Ascending aorta (tissue), 2 donors: ENCODE measurements at regions of chr21 and their contacts with region 1.

Region 1: GRCh38 chr21:41612674-41613532 is 104.9 kb upstream of the TMPRSS2 start:
- DNase-seq: peak; percentile 80 to 97
- H3K4me3 ChIP-seq: no peak overlapping the region
- H3K27ac ChIP-seq: peak overlapping the region; percentile 94 to 98
- H3K4me1 ChIP-seq: peaks cover 31 to 53% of the 10 kb centered on the region in 2 donors
- H3K27me3 ChIP-seq: no peaks in the 10 kb centered on the region
- CTCF ChIP-seq: peak; percentile 87 to 89 (median 87)

Region 2: GRCh38 chr21:41419911-41420862 is 192.7 kb before region 1 on chr21:
- intact Hi-C with region 1: loop called (anchors 10 kb)
- DNase-seq: peak; percentile 53 to 93
- H3K4me3 ChIP-seq: peak overlapping the region; percentile 79 to 82
- H3K27ac ChIP-seq: peak overlapping the region; percentile 83 to 88
- H3K4me1 ChIP-seq: no peaks in the 10 kb centered on the region
- H3K27me3 ChIP-seq: no peaks in the 10 kb centered on the region
- CTCF ChIP-seq: no peak

Region 3: DNA sequence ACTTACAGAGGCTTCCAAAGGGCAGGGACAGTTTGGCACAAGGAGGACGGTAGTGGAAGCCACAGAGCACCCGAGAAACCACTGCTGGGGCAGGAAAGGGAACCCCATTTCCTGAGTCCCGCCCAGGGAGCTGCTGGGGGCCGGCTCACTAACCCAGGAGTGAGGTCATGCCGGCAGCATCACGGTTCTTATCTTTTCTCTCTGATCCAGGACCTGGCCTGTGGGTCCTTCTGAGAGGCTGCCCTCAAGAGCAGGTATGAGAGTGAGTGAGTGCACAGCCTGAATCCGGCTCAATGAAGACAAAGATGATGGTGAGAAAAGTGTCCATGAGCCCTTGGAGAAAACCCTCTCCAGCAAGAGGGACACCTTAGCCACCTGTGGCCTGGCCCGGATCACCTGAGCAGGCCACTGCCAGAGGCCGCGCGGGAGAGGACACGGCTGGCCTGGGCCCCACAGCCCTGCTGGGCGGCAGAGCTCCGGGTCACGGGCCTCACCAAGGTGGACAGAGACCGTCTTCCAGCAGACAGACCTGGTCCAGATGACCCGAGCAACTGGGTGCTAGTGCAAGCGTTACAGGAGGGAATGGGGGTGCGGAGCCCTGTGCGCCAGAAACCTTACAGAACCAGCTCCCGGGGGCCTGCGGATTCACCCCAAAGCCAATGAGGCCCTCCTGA is 59.1 kb after region 1 on chr21:
- intact Hi-C with region 1: no loop called
- DNase-seq: no peak
- H3K4me3 ChIP-seq: no peak overlapping the region
- H3K27ac ChIP-seq: no peak overlapping the region
- H3K4me1 ChIP-seq: no peaks in the 10 kb centered on the region
- H3K27me3 ChIP-seq: no peaks in the 10 kb centered on the region
- CTCF ChIP-seq: no peak

Region 4: GRCh38 chr21:41726945-41727783 is 114.3 kb after region 1 on chr21:
- intact Hi-C with region 1: loop called (anchors 2 kb)
- DNase-seq: peak; percentile 62 to 93
- H3K4me3 ChIP-seq: no peak overlapping the region
- H3K27ac ChIP-seq: peak overlapping the region; percentile 83 to 91
- H3K4me1 ChIP-seq: peaks cover 9 to 17% of the 10 kb centered on the region in 2 donors
- H3K27me3 ChIP-seq: no peaks in the 10 kb centered on the region
- CTCF ChIP-seq: no peak

Region 5: DNA sequence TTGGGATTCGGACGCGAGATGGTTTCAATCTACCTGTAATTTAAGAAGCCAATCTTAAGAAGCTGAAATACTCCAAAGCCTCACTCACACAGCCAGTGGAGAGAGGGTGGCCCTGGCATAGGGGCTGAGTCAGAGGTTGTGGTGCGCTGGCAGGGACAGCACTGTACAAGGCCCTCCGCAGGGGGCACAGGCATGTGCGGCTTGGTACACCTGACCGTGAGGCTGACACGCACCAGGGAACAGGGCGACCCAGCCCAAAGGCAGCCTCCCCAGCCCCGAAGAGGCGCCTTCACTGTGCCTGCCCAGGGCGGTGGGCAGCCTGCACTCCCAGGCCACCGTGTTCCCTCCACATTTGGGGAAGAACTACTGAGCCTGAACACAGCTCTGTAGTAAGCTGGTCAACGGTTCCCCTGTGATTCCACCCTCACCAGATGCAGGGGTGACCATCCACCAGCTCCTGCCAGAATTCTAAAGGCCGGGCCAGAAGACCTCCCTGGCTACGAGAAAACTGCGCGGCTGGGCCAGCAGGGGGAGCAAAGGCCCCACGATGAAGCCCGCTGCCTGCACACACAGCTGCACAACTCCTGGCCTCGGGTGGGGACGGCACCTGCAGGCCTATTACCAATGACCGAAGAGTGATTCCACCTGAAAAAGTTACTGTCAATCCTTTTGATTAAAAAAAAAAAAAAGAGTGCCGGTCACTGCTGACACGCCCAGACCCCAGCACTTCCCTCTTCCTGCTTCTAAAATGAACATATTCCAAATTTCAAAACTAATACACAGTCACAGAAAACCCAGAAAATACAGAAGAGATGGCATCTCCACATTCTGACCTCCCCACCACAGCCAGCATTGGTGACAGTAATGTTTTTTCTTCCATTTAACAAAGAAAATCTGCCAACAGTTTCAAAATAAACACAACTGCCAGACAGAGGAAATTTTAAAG is 203.6 kb after region 1 on chr21:
- intact Hi-C with region 1: loop called (anchors 1 kb)
- DNase-seq: peak in 1 of 2 donors; percentile 77
- H3K4me3 ChIP-seq: no peak overlapping the region
- H3K27ac ChIP-seq: peak overlapping the region; percentile 3 to 57
- H3K4me1 ChIP-seq: peaks cover 0 to 4% of the 10 kb centered on the region in 2 donors
- H3K27me3 ChIP-seq: no peaks in the 10 kb centered on the region
- CTCF ChIP-seq: peak; percentile 64 to 87 (median 75)

Region 6: GRCh38 chr21:42009831-42010523 is 397.1 kb after region 1 on chr21 and contains the start of gene ZBTB21:
- intact Hi-C with region 1: loop called (anchors 2 kb)
- DNase-seq: peak; percentile 95 to 99
- H3K4me3 ChIP-seq: peak within 1 kb of the TSS; percentile 94 to 98
- H3K27ac ChIP-seq: peak within 1 kb of the TSS; percentile 96 to 97
- H3K4me1 ChIP-seq: peaks cover 0 to 5% of the 10 kb centered on the region in 2 donors
- H3K27me3 ChIP-seq: no peaks in the 10 kb centered on the region
- CTCF ChIP-seq: no peak
- total RNA-seq, gene ZBTB21: 11.1 TPM

Region 7: GRCh38 chr21:42117229-42117966 is 504.5 kb after region 1 on chr21:
- intact Hi-C with region 1: loop called (anchors 5 kb)
- DNase-seq: peak in 1 of 2 donors; percentile 89
- H3K4me3 ChIP-seq: peak overlapping the region in 1 of 2 donors; percentile 32
- H3K27ac ChIP-seq: no peak overlapping the region
- H3K4me1 ChIP-seq: no peaks in the 10 kb centered on the region
- H3K27me3 ChIP-seq: no peaks in the 10 kb centered on the region
- CTCF ChIP-seq: peak; percentile 91 to 95 (median 95)